Ovary (tissue), 10 donors: ENCODE measurements at regions of chr20 and their contacts with region 1.

Region 1: GRCh38 chr20:31712564-31713311 is 9.9 kb downstream of the BCL2L1 start:
- DNase-seq: peak in 4 of 5 donors; percentile 42 to 78 (median 71)
- H3K4me3 ChIP-seq: no peak overlapping the region
- H3K27ac ChIP-seq: peak overlapping the region in 1 of 2 donors; percentile 36
- H3K4me1 ChIP-seq: peaks cover 14% of the 10 kb centered on the region
- H3K27me3 ChIP-seq: no peaks in the 10 kb centered on the region
- CTCF ChIP-seq: no peak
- EP300 ChIP-seq: peak; percentile 65
- POLR2A ChIP-seq: no peak

Region 2: DNA sequence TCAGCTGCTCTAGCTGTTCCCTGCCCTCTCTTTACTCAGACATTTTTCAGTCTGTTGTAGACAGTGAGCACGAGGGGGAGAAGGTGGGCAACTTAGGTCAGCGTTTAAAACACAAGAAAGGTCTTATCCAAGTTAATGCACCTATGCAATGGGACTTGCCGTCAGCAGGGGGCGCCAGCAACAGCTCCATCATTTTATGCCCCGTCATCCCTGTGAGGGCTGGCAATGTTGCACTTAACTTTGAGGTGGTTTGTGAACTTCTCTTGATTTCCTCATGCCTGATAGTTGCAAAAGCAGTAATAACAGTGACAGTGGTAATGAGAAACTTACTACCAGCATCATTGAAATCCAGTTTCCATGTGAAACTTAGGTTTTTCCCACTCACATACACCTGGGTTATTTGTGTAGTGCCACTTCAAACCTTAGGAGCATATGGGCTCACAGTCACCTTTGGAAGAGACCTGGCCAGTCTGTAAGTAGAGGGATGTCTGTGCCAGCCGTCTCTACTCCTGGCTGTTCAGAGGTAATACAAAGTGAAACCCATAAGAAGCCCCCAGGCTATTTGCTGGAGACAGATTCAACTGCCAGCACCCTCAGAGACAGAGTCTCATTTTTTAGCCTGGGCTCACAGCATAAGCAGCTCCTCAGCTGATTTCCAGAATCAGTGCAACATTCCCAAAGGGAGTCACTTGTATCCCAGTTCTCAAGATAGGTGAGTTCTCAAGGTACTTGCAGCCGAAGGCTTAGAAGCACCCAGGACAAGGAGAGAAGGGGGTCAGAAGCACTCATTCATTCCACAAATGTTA is 152.4 kb before region 1 on chr20:
- intact Hi-C with region 1: loop called in 1 of 4 experiments (anchors 10 kb)
- DNase-seq: peak in 4 of 5 donors; percentile 51 to 79 (median 72)
- H3K4me3 ChIP-seq: no peak overlapping the region
- H3K27ac ChIP-seq: peak overlapping the region in 1 of 2 donors; percentile 20
- H3K4me1 ChIP-seq: no peaks in the 10 kb centered on the region
- H3K27me3 ChIP-seq: no peaks in the 10 kb centered on the region
- CTCF ChIP-seq: peak; percentile 50 to 75 (median 74)
- EP300 ChIP-seq: no peak
- POLR2A ChIP-seq: no peak

Region 3: GRCh38 chr20:31674895-31675827 is 37.6 kb before region 1 on chr20:
- intact Hi-C with region 1: no loop called
- DNase-seq: peak in 3 of 5 donors; percentile 40 to 60 (median 58)
- H3K4me3 ChIP-seq: no peak overlapping the region
- H3K27ac ChIP-seq: peak overlapping the region in 1 of 2 donors; percentile 61
- H3K4me1 ChIP-seq: peaks cover 42% of the 10 kb centered on the region
- H3K27me3 ChIP-seq: no peaks in the 10 kb centered on the region
- CTCF ChIP-seq: no peak
- EP300 ChIP-seq: no peak
- POLR2A ChIP-seq: no peak